CD4-positive, alpha-beta memory T cell (primary cell): ENCODE measurements at regions of chr2 and their contacts with region 1.

Region 1: DNA sequence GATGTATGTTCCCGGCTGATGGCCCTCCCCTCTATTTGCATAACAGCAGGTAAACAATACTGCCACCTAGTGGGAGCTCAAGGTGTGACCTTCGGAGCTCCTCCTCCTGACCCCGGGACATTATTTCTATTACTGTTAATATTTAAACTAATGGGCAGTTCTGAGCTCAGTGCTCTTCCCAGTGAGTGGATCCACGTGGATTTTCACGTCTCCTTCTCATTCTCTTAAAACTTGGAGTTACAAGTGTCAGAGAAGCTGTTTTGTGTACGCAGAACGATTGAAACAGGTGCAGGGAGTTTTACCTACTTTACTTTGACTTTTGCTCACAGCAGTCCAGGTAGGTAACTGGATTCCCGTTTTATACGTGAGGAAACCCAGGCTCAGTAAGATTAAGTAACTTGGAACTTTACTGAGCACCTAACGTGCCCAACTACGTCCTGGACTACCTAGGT is 127.3 kb downstream of the PRKCE start:
- DNase-seq: peak; percentile 70 to 74 (median 72)
- H3K4me3 ChIP-seq: no peak overlapping the region
- H3K4me3 Mint-ChIP-seq: peak overlapping the region in 4 of 8 donors; percentile 21 to 57 (median 53)
- H3K27ac ChIP-seq: no peak overlapping the region
- H3K27ac Mint-ChIP-seq: peak overlapping the region in 2 of 7 donors; percentile 3 to 6
- H3K4me1 ChIP-seq: peaks cover 5% of the 10 kb centered on the region
- H3K4me1 Mint-ChIP-seq: peaks cover 3 to 6% (median 5%) of the 10 kb centered on the region in 4 donors
- H3K27me3 ChIP-seq: no peaks in the 10 kb centered on the region
- H3K27me3 Mint-ChIP-seq: no peaks in the 10 kb centered on the region

Region 2: GRCh38 chr2:45643543-45644542 is 134.9 kb before region 1 on chr2:
- CTCF ChIA-PET with region 1: interaction called, 279 read pairs
- POLR2A ChIA-PET with region 1: interaction called, 6 read pairs
- intact Hi-C with region 1: loop called (anchors 1 kb)
- DNase-seq: peak; percentile 47 to 76 (median 68)
- H3K4me3 ChIP-seq: peak overlapping the region in 1 of 2 donors; percentile 39
- H3K4me3 Mint-ChIP-seq: peak overlapping the region in 6 of 8 donors; percentile 12 to 69 (median 41)
- H3K27ac ChIP-seq: no peak overlapping the region
- H3K27ac Mint-ChIP-seq: peak overlapping the region in 2 of 7 donors; percentile 24 to 71
- H3K4me1 ChIP-seq: peaks cover 9% of the 10 kb centered on the region
- H3K4me1 Mint-ChIP-seq: peaks cover 0 to 8% (median 2%) of the 10 kb centered on the region in 4 donors
- H3K27me3 ChIP-seq: peaks cover 8% of the 10 kb centered on the region
- H3K27me3 Mint-ChIP-seq: peaks cover 16 to 18% of the 10 kb centered on the region in 2 donors

Region 3: DNA sequence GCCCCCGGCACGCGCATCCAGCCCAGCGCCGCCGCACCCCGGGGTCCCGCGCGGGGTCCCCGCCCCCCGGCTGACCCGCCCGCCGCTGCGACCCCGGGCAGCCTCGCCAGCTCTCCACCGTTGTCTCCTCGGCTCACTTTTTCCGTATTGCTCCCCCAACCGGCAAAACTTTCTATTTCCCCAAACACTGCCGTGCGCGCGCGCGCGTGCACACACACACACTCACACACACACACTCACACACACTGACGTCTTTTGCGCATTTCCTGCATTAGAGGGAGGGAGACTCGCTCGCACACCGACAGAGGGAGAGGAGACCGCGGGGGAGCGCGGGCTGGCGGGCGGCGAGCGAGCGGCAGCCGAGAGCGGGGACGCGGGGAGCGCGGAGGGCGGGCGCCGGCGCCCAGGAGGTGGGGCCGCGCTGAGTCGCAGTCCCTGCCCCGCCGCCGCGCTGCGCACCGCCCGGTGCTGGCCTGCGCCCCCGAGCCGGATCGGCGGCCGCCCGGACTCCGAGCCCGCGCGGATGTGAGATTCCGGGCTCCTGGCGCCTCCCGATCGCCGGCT is 127.8 kb before region 1 on chr2:
- CTCF ChIA-PET with region 1: interaction called, 279 read pairs
- POLR2A ChIA-PET with region 1: interaction called, 4 read pairs
- intact Hi-C with region 1: no loop called
- DNase-seq: peak; percentile 96 to 97 (median 97)
- H3K4me3 ChIP-seq: peak overlapping the region; percentile 65 to 85
- H3K4me3 Mint-ChIP-seq: peak overlapping the region; percentile 91 to 98 (median 97)
- H3K27ac ChIP-seq: peak overlapping the region; percentile 71
- H3K27ac Mint-ChIP-seq: peak overlapping the region; percentile 87 to 99 (median 98)
- H3K4me1 ChIP-seq: peaks cover 21% of the 10 kb centered on the region
- H3K4me1 Mint-ChIP-seq: peaks cover 20 to 38% (median 27%) of the 10 kb centered on the region in 4 donors
- H3K27me3 ChIP-seq: no peaks in the 10 kb centered on the region
- H3K27me3 Mint-ChIP-seq: peaks cover 1 to 2% of the 10 kb centered on the region in 2 donors

Region 4: GRCh38 chr2:45765007-45765727 is 13.6 kb before region 1 on chr2:
- CTCF ChIA-PET with region 1: interaction called, 10 read pairs
- POLR2A ChIA-PET with region 1: no interaction called
- intact Hi-C with region 1: no loop called
- DNase-seq: no peak
- H3K4me3 ChIP-seq: no peak overlapping the region
- H3K4me3 Mint-ChIP-seq: no peak overlapping the region
- H3K27ac ChIP-seq: no peak overlapping the region
- H3K27ac Mint-ChIP-seq: no peak overlapping the region
- H3K4me1 ChIP-seq: no peaks in the 10 kb centered on the region
- H3K4me1 Mint-ChIP-seq: peaks cover 0 to 6% (median 1%) of the 10 kb centered on the region in 4 donors
- H3K27me3 ChIP-seq: no peaks in the 10 kb centered on the region
- H3K27me3 Mint-ChIP-seq: no peaks in the 10 kb centered on the region

Region 5: DNA sequence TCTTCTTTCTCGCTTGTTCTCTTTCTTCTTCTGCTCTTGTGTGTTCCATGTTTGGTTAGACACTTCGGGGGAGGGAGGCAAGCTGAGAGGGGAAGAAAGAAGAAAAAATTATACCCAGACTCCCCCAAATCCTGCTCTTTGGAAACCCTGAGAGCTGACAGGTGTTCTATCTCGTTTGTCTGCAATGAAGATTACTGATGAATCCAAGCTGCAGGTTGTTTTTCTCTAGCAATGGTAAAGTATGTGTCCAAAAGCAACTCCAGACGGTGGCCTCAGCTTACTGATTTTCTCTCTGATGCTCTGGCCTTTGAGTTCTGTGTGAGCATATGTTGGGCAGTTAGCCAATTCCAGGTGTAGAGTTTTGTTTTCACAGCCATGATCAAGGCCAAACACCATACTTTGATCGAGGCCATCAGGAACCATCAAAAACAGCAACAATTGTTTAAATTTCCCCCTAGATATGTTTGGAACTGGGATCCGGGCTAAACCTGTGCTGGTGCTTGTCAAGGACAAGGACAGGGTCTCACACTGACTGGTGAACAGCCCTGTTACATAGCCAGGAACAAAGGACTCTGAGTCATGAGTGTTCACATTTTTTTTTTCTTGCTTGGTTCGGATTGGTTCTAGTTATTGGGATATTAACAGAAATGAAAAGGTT is 14.7 kb after region 1 on chr2:
- CTCF ChIA-PET with region 1: interaction called, 20 read pairs
- POLR2A ChIA-PET with region 1: no interaction called
- intact Hi-C with region 1: no loop called
- DNase-seq: no peak
- H3K4me3 ChIP-seq: no peak overlapping the region
- H3K4me3 Mint-ChIP-seq: no peak overlapping the region
- H3K27ac ChIP-seq: no peak overlapping the region
- H3K27ac Mint-ChIP-seq: no peak overlapping the region
- H3K4me1 ChIP-seq: no peaks in the 10 kb centered on the region
- H3K4me1 Mint-ChIP-seq: peaks cover 0 to 7% (median 2%) of the 10 kb centered on the region in 4 donors
- H3K27me3 ChIP-seq: no peaks in the 10 kb centered on the region
- H3K27me3 Mint-ChIP-seq: no peaks in the 10 kb centered on the region

Region 6: DNA sequence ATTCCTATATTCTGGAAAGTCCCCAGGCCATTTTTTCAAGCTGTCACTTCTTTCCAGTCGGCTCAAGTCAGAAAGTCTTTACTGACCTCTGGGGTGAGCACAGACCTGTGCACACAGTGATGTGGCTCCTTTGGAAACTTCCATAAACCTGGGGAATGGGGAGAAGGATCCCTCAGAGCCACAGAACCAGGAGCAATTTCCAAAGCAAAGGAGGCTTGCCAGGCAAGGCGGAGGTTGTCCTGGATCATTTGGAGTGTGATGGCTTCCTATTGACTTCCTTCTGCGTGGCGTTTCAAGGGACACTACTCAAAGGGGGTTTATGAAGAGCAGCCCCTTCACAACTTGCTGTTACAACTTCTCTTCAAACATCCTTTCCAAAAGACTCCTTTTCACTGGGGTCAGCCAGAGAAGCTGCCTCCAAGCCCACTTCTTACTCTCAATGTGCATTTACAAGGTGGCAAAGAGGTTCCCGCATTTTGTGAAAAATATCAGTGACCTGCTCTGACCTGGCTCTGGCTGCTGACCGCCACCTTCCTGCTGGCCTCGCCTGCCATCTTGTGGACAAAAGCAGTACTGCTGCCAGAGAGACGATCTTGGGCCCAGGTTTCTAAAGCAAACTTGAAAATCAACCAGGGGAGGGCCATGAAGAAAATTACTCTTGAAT is 682.4 kb after region 1 on chr2:
- CTCF ChIA-PET with region 1: no interaction called
- POLR2A ChIA-PET with region 1: no interaction called
- intact Hi-C with region 1: loop called (anchors 1 kb)
- DNase-seq: peak; percentile 53 to 71 (median 61)
- H3K4me3 ChIP-seq: no peak overlapping the region
- H3K4me3 Mint-ChIP-seq: no peak overlapping the region
- H3K27ac ChIP-seq: no peak overlapping the region
- H3K27ac Mint-ChIP-seq: peak overlapping the region in 2 of 7 donors; percentile 51 to 81
- H3K4me1 ChIP-seq: peaks cover 7% of the 10 kb centered on the region
- H3K4me1 Mint-ChIP-seq: peaks cover 4 to 12% (median 10%) of the 10 kb centered on the region in 4 donors
- H3K27me3 ChIP-seq: no peaks in the 10 kb centered on the region
- H3K27me3 Mint-ChIP-seq: peaks cover 0 to 2% of the 10 kb centered on the region in 2 donors